Panc1 (cell line): ENCODE measurements at regions of chr16 and their contacts with region 1.

Region 1: DNA sequence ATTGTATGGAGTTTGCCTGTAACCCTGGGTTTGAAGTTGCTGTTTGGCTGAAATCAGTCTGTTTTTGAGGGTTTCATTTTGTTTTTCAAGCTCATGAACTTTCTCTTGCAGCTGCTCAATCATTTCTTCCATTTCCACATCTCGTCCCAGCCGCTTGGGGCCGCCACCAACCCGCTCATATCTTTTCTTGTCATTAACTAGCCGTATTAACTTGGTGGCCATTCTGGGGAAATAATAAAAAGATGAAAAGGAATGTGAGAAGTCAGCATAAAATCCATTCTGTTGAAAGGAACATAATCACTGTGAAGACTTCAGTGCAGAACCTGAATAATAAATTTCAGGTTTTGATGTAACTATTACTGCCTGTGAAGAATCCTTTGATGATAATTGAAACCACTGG is 11.5 kb downstream of the RPGRIP1L start:
- DNase-seq: no peak
- ATAC-seq: no peak
- H3K4me3 ChIP-seq: no peak overlapping the region
- H3K27ac ChIP-seq: peak overlapping the region; percentile 23; the same call in 1 of the 2 replicates
- H3K4me1 ChIP-seq: no peaks in the 10 kb centered on the region; the same call in 1 of the 2 replicates
- H3K27me3 ChIP-seq: no peaks in the 10 kb centered on the region
- CTCF ChIP-seq: peak; percentile 75

Region 2: DNA sequence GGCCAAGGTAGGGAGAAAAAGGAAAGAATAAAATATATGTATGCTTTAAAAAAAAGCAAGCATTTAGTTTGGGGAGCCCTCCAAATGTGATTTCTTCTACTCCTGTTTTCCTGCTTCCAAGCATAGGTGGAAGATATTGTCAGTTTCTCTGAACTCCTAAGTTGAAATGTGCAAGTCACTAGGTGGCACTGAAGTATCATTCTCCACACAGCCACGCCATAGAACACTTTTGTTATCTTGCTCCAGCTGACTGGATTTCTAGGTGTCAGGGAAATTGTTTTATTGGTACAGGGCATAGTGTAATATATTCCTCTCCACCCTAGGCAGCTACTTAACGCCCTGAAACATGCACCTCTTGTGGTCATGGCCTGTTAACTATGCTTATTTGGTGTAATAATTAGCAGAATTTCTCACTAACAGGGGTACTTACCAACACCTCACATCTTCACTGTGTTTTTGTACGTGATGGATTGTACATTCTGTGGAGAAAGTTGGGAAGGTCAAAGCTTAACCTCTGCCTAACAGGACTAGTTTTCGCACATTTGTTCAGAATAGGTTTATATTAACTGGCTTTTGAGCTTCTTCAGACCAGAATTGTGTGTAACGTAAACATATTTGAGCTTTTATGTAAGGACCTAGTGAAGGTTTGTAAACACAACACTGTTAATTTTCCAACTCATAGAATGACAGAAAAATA is 81.2 kb after region 1 on chr16:
- CTCF ChIA-PET with region 1: no interaction called
- POLR2A ChIA-PET with region 1: interaction called, 3 read pairs
- in situ Hi-C with region 1: no loop called
- intact Hi-C with region 1: loop called (anchors 5 kb)
- DNase-seq: no peak
- ATAC-seq: peak; percentile 56
- H3K4me3 ChIP-seq: no peak overlapping the region
- H3K27ac ChIP-seq: peak overlapping the region; percentile 89
- H3K4me1 ChIP-seq: peaks cover 67% of the 10 kb centered on the region
- H3K27me3 ChIP-seq: no peaks in the 10 kb centered on the region
- CTCF ChIP-seq: peak; percentile 74